Heart left ventricle (tissue), 16 donors: ENCODE measurements at regions of chr2 and their contacts with region 1.

Region 1: GRCh38 chr2:126527836-126528507 is 128.0 kb upstream of the GYPC start:
- DNase-seq: peak; percentile 62 to 83 (median 71)
- ATAC-seq: peak in 3 of 4 donors; percentile 71 to 88 (median 84)
- H3K4me3 ChIP-seq: no peak overlapping the region
- H3K27ac ChIP-seq: no peak overlapping the region
- H3K4me1 ChIP-seq: no peaks in the 10 kb centered on the region
- H3K27me3 ChIP-seq: no peaks in the 10 kb centered on the region
- CTCF ChIP-seq: peak; percentile 53 to 79 (median 68)
- POLR2A ChIP-seq: no peak

Region 2: GRCh38 chr2:126634273-126634861 is 106.4 kb after region 1 on chr2:
- intact Hi-C with region 1: loop called in 2 of 10 experiments (anchors 5 to 10 kb)
- DNase-seq: peak in 1 of 5 donors; percentile 33
- ATAC-seq: no peak
- H3K4me3 ChIP-seq: no peak overlapping the region
- H3K27ac ChIP-seq: no peak overlapping the region
- H3K4me1 ChIP-seq: peaks cover 0 to 16% (median 4%) of the 10 kb centered on the region in 12 donors
- H3K27me3 ChIP-seq: no peaks in the 10 kb centered on the region
- CTCF ChIP-seq: peak in 11 of 12 donors; percentile 8 to 53 (median 33)
- POLR2A ChIP-seq: no peak

Region 3: DNA sequence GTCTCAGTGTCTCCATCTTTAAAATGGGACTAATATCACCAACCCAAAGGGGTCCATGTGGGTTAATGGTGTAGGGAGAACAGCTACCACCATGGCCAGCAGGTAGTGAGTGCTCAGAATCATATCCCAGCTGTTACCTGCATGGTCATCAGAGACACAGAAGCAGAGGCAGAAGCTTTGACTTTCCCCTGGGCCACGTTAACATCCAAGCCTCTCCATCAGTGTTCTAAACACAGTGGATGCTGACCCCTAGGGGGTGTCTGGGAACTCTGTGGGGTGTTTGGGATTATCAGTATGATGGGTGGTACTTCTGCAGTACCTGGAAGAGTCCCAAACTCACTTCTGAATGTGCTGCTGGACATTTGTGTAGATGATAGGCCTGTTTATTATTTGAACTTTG is 221.6 kb after region 1 on chr2:
- intact Hi-C with region 1: loop called in 2 of 10 experiments (anchors 1 to 2 kb)
- DNase-seq: no peak
- ATAC-seq: peak; percentile 61 to 76 (median 69)
- H3K4me3 ChIP-seq: no peak overlapping the region
- H3K27ac ChIP-seq: no peak overlapping the region
- H3K4me1 ChIP-seq: peaks cover 0 to 3% (median 0%) of the 10 kb centered on the region in 12 donors
- H3K27me3 ChIP-seq: no peaks in the 10 kb centered on the region
- CTCF ChIP-seq: peak in 9 of 12 donors; percentile 8 to 48 (median 37)
- POLR2A ChIP-seq: no peak

Region 4: DNA sequence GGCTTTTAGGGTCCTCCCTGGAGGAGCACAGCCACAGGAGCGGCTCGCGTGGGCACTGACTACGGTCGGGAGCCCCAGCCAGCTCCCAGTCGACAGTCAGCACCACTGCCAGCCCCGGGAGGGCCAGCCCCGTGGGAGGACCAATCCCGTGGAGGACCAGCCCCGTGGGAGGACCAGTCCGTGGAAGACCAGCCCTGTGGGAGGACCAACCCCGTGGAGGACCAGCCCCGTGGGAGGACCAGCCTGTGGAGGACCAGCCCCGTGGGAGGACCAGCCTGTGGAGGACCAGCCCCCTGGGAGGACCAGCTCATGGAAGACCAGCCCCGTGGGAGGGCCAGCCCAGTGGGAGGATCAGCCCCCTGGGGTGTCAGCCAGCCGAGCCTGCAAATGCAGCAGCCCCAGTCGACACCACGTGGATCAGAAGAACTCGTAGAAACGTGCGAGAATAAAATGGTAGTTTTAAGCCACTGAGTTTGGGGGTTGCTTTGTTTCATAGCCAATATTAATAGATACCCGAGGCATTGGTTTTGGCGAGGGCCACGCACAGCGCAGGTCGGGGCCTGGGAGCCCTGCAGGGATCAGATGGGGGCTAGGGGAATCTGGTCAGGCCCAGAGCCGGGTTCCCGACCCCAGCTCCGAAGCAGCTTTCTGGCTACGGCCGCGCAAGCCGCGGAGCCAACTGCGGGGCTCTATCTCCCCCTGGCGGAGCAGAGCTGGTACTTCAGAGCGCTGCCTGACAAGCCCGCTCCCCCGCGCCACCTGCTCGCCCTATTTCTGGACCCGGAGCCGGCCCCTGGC is 443.7 kb after region 1 on chr2:
- intact Hi-C with region 1: loop called in 1 of 10 experiments (anchors 10 kb)
- DNase-seq: peak; percentile 47 to 85 (median 67)
- ATAC-seq: peak; percentile 79 to 93 (median 88)
- H3K4me3 ChIP-seq: peak overlapping the region in 11 of 12 donors; percentile 20 to 61 (median 52)
- H3K27ac ChIP-seq: peak overlapping the region in 1 of 12 donors; percentile 35
- H3K4me1 ChIP-seq: peaks cover 0 to 14% (median 5%) of the 10 kb centered on the region in 12 donors
- H3K27me3 ChIP-seq: peaks cover 0 to 42% (median 7%) of the 10 kb centered on the region in 9 donors
- CTCF ChIP-seq: peak; percentile 88 to 98 (median 96)
- POLR2A ChIP-seq: no peak